Naive thymus-derived CD4-positive, alpha-beta T cell (primary cell): ENCODE measurements at regions of chr11 and their contacts with region 1.

Region 1: DNA sequence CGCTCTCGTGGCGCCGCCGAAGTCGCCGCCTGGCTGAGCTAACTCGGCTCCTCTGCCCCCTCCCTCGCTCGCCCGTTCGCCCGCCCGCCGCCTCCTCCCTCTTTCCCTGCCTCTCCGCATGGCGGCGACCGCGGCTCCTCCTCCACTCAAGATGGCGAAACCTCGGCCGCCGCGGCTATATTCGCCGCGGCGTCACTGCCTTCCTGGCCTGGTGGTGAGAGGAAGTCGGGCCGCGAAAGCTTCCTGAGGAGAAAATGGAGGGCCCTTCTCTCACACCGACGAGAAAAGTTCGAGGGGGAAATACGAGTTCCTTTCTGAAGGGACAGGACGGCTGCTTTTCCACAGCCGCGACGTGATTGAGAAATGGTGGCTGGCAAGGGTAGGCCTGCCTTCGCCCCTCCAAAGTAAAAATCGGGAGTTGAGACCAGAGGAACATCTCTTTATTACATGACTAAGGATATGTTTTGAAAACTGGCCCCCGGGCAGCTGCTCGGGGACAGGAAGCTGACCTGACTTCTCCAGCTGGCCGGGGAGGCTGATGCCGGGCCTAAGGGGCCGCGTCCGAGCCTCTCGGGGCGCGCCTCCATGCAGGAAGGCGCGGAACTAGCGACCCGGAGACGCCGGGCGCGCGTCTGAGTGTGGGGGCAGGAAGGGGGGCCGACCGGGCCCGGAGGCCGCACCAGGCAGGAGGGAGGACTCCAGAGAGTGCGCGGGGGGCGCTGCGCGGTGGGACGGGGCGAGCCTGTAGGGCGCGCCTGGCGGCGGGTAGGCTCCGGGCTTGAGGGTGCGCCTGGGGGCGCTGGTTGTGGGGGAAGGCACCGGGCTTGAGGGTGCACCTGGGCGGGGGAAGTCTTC is at the start of gene DDX6:
- DNase-seq: peak; percentile 84 to 92 (median 89)
- ATAC-seq: peak; percentile 79
- H3K4me3 ChIP-seq: peak within 1 kb of the TSS; percentile 78
- H3K4me3 Mint-ChIP-seq: peak within 1 kb of the TSS; percentile 92 to 100 (median 98)
- H3K27ac ChIP-seq: peak within 1 kb of the TSS; percentile 99
- H3K27ac Mint-ChIP-seq: peak within 1 kb of the TSS; percentile 95 to 100 (median 99)
- H3K4me1 ChIP-seq: peaks cover 15 to 24% of the 10 kb centered on the region in 2 donors
- H3K4me1 Mint-ChIP-seq: peaks cover 20 to 38% (median 28%) of the 10 kb centered on the region in 7 donors
- H3K27me3 ChIP-seq: no peaks in the 10 kb centered on the region
- H3K27me3 Mint-ChIP-seq: no peaks in the 10 kb centered on the region
- total RNA-seq, gene DDX6: 154 to 346 (median 272) TPM

Region 2: GRCh38 chr11:118610804-118611795 is 180.2 kb before region 1 on chr11:
- CTCF ChIA-PET with region 1: no interaction called
- POLR2A ChIA-PET with region 1: interaction called, 5 read pairs
- intact Hi-C with region 1: loop called in 1 of 2 experiments (anchors 5 kb)
- DNase-seq: peak; percentile 72 to 89 (median 82)
- ATAC-seq: peak; percentile 71
- H3K4me3 ChIP-seq: peak overlapping the region; percentile 61
- H3K4me3 Mint-ChIP-seq: peak overlapping the region; percentile 35 to 88 (median 78)
- H3K27ac ChIP-seq: peak overlapping the region; percentile 57
- H3K27ac Mint-ChIP-seq: peak overlapping the region in 7 of 9 donors; percentile 33 to 82 (median 70)
- H3K4me1 ChIP-seq: peaks cover 18 to 23% of the 10 kb centered on the region in 2 donors
- H3K4me1 Mint-ChIP-seq: peaks cover 16 to 26% (median 23%) of the 10 kb centered on the region in 7 donors
- H3K27me3 ChIP-seq: no peaks in the 10 kb centered on the region
- H3K27me3 Mint-ChIP-seq: peaks cover 0 to 54% (median 0%) of the 10 kb centered on the region in 5 donors

Region 3: GRCh38 chr11:118641397-118642270 is 149.7 kb before region 1 on chr11:
- CTCF ChIA-PET with region 1: no interaction called
- POLR2A ChIA-PET with region 1: no interaction called
- intact Hi-C with region 1: no loop called
- DNase-seq: no peak
- ATAC-seq: no peak
- H3K4me3 ChIP-seq: no peak overlapping the region
- H3K4me3 Mint-ChIP-seq: peak overlapping the region in 1 of 10 donors; percentile 40
- H3K27ac ChIP-seq: no peak overlapping the region
- H3K27ac Mint-ChIP-seq: peak overlapping the region in 1 of 9 donors; percentile 68
- H3K4me1 ChIP-seq: no peaks in the 10 kb centered on the region
- H3K4me1 Mint-ChIP-seq: peaks cover 0 to 2% (median 0%) of the 10 kb centered on the region in 7 donors
- H3K27me3 ChIP-seq: no peaks in the 10 kb centered on the region
- H3K27me3 Mint-ChIP-seq: no peaks in the 10 kb centered on the region

Region 4: DNA sequence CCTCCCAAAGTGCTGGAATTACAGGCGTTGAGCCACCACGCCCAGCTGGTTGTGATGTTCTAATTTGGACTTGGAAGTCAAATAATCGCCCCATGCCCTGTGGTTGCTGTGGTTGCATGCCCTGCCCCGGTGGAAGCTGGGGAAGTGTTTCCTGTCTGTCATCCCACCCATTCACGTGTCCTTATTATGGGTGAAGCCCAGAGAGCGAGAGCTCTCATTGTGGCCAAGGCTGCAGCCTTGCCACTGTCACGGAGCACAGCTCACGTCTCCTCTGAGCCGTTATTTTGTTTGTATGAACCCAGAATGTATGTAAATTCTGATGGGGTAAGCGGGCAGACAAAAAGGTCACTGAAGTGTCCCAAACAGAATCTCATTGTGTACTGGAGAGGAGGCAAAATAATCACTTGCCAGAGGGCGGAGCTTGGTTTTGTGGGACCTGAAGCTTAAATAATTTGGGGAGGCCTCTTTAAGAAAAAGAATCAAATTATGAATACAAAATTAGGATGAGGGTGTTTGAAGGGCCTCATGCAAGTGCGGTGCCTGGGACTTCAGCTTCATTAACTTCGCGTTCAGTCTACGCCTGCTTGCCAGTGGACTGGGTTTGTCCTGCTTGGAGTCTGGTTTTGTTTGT is 86.1 kb before region 1 on chr11:
- CTCF ChIA-PET with region 1: interaction called, 7 read pairs
- POLR2A ChIA-PET with region 1: interaction called, 28 read pairs
- intact Hi-C with region 1: no loop called
- DNase-seq: peak in 7 of 9 donors; percentile 50 to 72 (median 63)
- ATAC-seq: peak; percentile 79
- H3K4me3 ChIP-seq: no peak overlapping the region
- H3K4me3 Mint-ChIP-seq: peak overlapping the region; percentile 67 to 84 (median 76)
- H3K27ac ChIP-seq: peak overlapping the region; percentile 62
- H3K27ac Mint-ChIP-seq: peak overlapping the region; percentile 49 to 99 (median 95)
- H3K4me1 ChIP-seq: peaks cover 28 to 41% of the 10 kb centered on the region in 2 donors
- H3K4me1 Mint-ChIP-seq: peaks cover 20 to 63% (median 47%) of the 10 kb centered on the region in 7 donors
- H3K27me3 ChIP-seq: no peaks in the 10 kb centered on the region
- H3K27me3 Mint-ChIP-seq: peaks cover 0 to 8% (median 0%) of the 10 kb centered on the region in 5 donors

Region 5: GRCh38 chr11:118856314-118856713 is 65.0 kb after region 1 on chr11:
- CTCF ChIA-PET with region 1: interaction called, 3 read pairs
- POLR2A ChIA-PET with region 1: interaction called, 23 read pairs
- intact Hi-C with region 1: no loop called
- DNase-seq: no peak
- ATAC-seq: no peak
- H3K4me3 ChIP-seq: no peak overlapping the region
- H3K4me3 Mint-ChIP-seq: no peak overlapping the region
- H3K27ac ChIP-seq: no peak overlapping the region
- H3K27ac Mint-ChIP-seq: no peak overlapping the region
- H3K4me1 ChIP-seq: no peaks in the 10 kb centered on the region
- H3K4me1 Mint-ChIP-seq: peaks cover 3 to 27% (median 21%) of the 10 kb centered on the region in 7 donors
- H3K27me3 ChIP-seq: no peaks in the 10 kb centered on the region
- H3K27me3 Mint-ChIP-seq: no peaks in the 10 kb centered on the region

Region 6: DNA sequence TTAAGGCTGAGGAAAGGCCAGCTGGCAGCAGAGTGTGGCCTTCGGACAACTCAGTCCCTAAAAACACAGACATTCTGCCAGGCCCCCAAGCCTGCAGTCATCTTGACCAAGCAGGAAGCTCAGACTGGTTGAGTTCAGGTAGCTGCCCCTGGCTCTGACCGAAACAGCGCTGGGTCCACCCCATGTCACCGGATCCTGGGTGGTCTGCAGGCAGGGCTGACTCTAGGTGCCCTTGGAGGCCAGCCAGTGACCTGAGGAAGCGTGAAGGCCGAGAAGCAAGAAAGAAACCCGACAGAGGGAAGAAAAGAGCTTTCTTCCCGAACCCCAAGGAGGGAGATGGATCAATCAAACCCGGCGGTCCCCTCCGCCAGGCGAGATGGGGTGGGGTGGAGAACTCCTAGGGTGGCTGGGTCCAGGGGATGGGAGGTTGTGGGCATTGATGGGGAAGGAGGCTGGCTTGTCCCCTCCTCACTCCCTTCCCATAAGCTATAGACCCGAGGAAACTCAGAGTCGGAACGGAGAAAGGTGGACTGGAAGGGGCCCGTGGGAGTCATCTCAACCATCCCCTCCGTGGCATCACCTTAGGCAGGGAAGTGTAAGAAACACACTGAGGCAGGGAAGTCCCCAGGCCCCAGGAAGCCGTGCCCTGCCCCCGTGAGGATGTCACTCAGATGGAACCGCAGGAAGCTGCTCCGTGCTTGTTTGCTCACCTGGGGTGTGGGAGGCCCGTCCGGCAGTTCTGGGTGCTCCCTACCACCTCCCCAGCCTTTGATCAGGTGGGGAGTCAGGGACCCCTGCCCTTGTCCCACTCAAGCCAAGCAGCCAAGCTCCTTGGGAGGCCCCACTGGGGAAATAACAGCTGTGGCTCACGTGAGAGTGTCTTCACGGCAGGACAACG is 104.1 kb after region 1 on chr11:
- CTCF ChIA-PET with region 1: interaction called, 68 read pairs
- POLR2A ChIA-PET with region 1: interaction called, 72 read pairs
- intact Hi-C with region 1: loop called (anchors 1 kb)
- DNase-seq: peak; percentile 54 to 87 (median 81)
- ATAC-seq: peak; percentile 86
- H3K4me3 ChIP-seq: peak overlapping the region; percentile 22
- H3K4me3 Mint-ChIP-seq: peak overlapping the region; percentile 76 to 86 (median 81)
- H3K27ac ChIP-seq: peak overlapping the region; percentile 94
- H3K27ac Mint-ChIP-seq: peak overlapping the region; percentile 94 to 99 (median 97)
- H3K4me1 ChIP-seq: peaks cover 64 to 67% of the 10 kb centered on the region in 2 donors
- H3K4me1 Mint-ChIP-seq: peaks cover 59 to 78% (median 71%) of the 10 kb centered on the region in 7 donors
- H3K27me3 ChIP-seq: no peaks in the 10 kb centered on the region
- H3K27me3 Mint-ChIP-seq: no peaks in the 10 kb centered on the region

Region 7: GRCh38 chr11:118956094-118956846 is 164.9 kb after region 1 on chr11 and contains the start of gene UPK2:
- CTCF ChIA-PET with region 1: interaction called, 5 read pairs
- POLR2A ChIA-PET with region 1: no interaction called
- intact Hi-C with region 1: loop called in 1 of 2 experiments (anchors 1 kb)
- DNase-seq: peak; percentile 74 to 91 (median 83)
- ATAC-seq: peak; percentile 99
- H3K4me3 ChIP-seq: no peak within 1 kb of the TSS
- H3K4me3 Mint-ChIP-seq: peak within 1 kb of the TSS in 1 of 10 donors; percentile 49
- H3K27ac ChIP-seq: no peak within 1 kb of the TSS
- H3K27ac Mint-ChIP-seq: peak within 1 kb of the TSS in 8 of 9 donors; percentile 2 to 77 (median 54)
- H3K4me1 ChIP-seq: no peaks in the 10 kb centered on the region
- H3K4me1 Mint-ChIP-seq: peaks cover 0 to 11% (median 5%) of the 10 kb centered on the region in 7 donors
- H3K27me3 ChIP-seq: no peaks in the 10 kb centered on the region
- H3K27me3 Mint-ChIP-seq: peaks cover 0 to 31% (median 0%) of the 10 kb centered on the region in 5 donors
- total RNA-seq, gene UPK2: 0.24 TPM in 1 of 5 experiments, not detected in the others

Region 8: GRCh38 chr11:119101759-119102423 is 310.6 kb after region 1 on chr11 and contains the start of gene DPAGT1:
- CTCF ChIA-PET with region 1: no interaction called
- POLR2A ChIA-PET with region 1: interaction called, 4 read pairs
- intact Hi-C with region 1: loop called in 1 of 2 experiments (anchors 5 kb)
- DNase-seq: peak; percentile 68 to 90 (median 86)
- ATAC-seq: peak; percentile 90
- H3K4me3 ChIP-seq: peak within 1 kb of the TSS; percentile 79
- H3K4me3 Mint-ChIP-seq: peak within 1 kb of the TSS; percentile 91 to 100 (median 96)
- H3K27ac ChIP-seq: peak within 1 kb of the TSS; percentile 95
- H3K27ac Mint-ChIP-seq: peak within 1 kb of the TSS; percentile 98 to 100 (median 99)
- H3K4me1 ChIP-seq: peaks cover 21 to 26% of the 10 kb centered on the region in 2 donors
- H3K4me1 Mint-ChIP-seq: peaks cover 24 to 64% (median 50%) of the 10 kb centered on the region in 7 donors
- H3K27me3 ChIP-seq: no peaks in the 10 kb centered on the region
- H3K27me3 Mint-ChIP-seq: no peaks in the 10 kb centered on the region
- total RNA-seq, gene DPAGT1: 21.9 to 63.9 (median 37.9) TPM